A673 (cell line): ENCODE measurements at regions of chr1 and their contacts with region 1.

Region 1: GRCh38 chr1:57711326-57711725 is 287.5 kb upstream of the DAB1 start:
- DNase-seq: peak; percentile 70
- H3K4me3 ChIP-seq: no peak overlapping the region
- H3K27ac ChIP-seq: peak overlapping the region; percentile 80
- H3K4me1 ChIP-seq: peaks cover 73% of the 10 kb centered on the region
- H3K27me3 ChIP-seq: no peaks in the 10 kb centered on the region
- CTCF ChIP-seq: no peak

Region 2: DNA sequence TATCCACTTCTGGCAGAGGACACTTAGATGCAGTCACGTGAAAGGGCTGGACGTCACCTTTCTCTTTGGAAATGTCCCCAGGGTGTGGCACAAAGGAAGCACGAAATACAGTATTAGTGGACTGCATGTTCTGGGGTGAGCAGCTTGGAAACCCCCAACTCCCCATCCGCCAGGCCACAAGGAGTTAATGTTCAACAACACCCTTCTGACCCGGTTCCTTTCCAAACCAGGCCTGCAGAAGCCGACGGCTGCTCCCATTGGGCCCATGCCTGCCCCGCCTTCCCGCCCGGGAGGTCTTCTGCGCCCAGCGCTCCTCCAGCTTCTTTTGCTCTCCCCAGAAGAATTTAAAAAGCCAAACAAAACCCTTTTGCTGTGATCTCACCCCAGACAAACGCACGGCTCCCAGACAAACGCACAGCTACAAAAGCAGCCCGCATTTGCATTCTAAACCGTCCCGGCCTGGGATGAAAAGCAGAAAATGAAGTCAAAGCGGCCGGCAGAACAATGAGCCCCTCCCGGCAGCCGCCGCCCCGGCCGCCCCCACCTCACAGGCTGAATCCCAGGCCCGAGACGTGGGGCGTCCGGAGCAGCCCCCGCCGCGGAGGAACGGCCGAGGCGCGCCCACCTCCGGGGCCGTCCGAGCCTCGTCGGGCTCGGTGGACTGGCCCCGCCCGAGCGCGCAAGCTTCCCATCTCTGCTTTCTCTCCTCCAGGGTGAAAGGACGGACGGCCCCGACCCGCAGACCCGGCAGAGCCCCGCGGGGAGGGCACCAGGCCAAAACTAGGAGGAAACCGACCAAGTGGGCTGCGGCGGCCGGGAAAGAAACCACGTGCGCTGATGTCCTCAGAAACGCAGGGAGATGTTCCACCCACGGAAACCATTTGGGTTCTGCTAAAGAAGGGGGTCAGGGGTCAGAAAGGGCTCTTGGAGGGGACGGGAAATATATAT is 1233.9 kb before region 1 on chr1:
- CTCF ChIA-PET with region 1: no interaction called
- POLR2A ChIA-PET with region 1: no interaction called
- intact Hi-C with region 1: no loop called
- DNase-seq: no peak
- H3K4me3 ChIP-seq: no peak overlapping the region
- H3K27ac ChIP-seq: no peak overlapping the region
- H3K4me1 ChIP-seq: no peaks in the 10 kb centered on the region
- H3K27me3 ChIP-seq: peaks cover 56% of the 10 kb centered on the region
- CTCF ChIP-seq: no peak

Region 3: GRCh38 chr1:57800376-57800775 is 89.0 kb after region 1 on chr1:
- CTCF ChIA-PET with region 1: no interaction called
- POLR2A ChIA-PET with region 1: no interaction called
- intact Hi-C with region 1: no loop called
- DNase-seq: no peak
- H3K4me3 ChIP-seq: no peak overlapping the region
- H3K27ac ChIP-seq: no peak overlapping the region
- H3K4me1 ChIP-seq: no peaks in the 10 kb centered on the region
- H3K27me3 ChIP-seq: no peaks in the 10 kb centered on the region
- CTCF ChIP-seq: no peak

Region 4: DNA sequence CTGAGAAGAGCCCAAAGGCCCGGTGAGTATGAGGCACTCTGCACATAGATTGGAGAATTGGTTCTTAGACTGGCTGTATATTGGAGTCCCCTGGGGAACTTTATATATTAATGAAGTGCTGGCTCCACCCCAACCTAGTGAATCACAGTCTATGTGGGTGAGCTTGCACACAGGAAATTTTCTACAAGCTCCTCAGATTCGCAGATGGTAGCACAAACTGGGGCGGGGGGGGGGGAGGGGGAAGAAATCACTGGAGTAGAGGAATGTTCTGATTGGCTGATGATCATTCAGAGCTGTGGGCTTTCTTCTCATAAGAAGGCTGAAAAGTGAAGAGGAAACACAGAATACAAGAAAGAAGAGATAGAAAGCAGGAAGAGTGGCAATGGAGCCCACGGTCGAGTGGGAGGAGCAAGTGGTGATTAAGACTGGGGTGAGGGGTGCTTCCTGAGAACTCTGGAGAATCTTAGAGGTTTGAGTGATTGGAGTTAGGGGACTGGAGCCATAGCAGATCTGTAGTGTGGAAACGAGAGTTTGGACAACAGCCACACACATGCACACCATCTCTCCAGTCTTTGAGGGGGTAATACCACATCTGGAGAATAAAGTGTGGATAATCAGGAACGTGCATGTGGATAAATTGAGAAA is 178.5 kb after region 1 on chr1:
- CTCF ChIA-PET with region 1: no interaction called
- POLR2A ChIA-PET with region 1: interaction called, 3 read pairs
- intact Hi-C with region 1: loop called (anchors 5 kb)
- DNase-seq: peak; percentile 92
- H3K4me3 ChIP-seq: no peak overlapping the region
- H3K27ac ChIP-seq: peak overlapping the region; percentile 73
- H3K4me1 ChIP-seq: peaks cover 39% of the 10 kb centered on the region
- H3K27me3 ChIP-seq: no peaks in the 10 kb centered on the region
- CTCF ChIP-seq: no peak

Region 5: DNA sequence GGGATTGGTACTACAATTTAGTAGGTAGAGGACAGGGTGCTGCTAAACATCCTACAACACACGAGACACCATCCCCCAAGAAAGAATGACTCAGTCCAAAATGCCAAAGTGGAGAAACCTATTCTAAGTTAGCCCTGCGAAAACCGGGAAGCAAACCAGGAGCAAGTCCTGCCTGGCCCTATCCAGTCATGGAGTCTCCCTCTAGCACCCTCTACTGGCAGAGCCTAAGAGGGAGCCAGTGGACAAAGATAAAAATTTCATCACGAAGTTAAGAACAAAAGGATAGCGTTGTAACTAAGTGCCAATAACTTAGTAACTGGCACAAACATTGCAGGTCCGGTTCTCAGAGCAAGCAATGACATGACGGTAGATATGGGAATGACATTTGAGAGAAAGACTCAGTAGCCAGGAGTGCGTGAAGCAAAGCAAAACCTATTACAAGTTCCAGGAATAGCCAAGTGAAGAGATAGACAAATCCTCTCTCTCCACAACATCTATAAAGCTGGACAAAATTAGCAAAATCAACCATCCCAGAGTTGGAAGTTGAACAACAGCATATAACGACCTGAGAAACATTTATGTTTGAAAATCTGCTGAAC is 451.7 kb after region 1 on chr1:
- CTCF ChIA-PET with region 1: no interaction called
- POLR2A ChIA-PET with region 1: no interaction called
- intact Hi-C with region 1: loop called (anchors 1 kb)
- DNase-seq: peak; percentile 87
- H3K4me3 ChIP-seq: no peak overlapping the region
- H3K27ac ChIP-seq: no peak overlapping the region
- H3K4me1 ChIP-seq: peaks cover 17% of the 10 kb centered on the region
- H3K27me3 ChIP-seq: no peaks in the 10 kb centered on the region
- CTCF ChIP-seq: peak; percentile 98

Region 6: DNA sequence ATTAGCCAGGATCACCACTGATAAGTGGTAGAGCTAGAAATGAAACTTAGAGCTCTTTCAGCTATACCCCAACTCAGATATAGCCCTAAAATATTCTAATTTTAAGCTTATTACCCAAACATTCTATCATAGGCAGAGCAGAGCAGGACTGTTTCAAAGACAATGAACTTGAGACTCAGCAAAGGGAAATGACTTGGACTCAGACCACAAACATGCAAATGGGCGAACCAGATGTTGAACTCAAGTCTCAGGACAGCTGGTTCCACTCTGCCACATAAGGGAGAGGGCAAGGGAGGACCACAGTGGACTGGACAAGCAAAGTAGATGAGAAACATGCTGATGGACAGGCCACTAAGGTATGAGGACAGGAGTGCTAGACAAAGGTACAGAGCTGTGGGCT is 519.9 kb after region 1 on chr1:
- CTCF ChIA-PET with region 1: no interaction called
- POLR2A ChIA-PET with region 1: no interaction called
- intact Hi-C with region 1: no loop called
- DNase-seq: no peak
- H3K4me3 ChIP-seq: no peak overlapping the region
- H3K27ac ChIP-seq: no peak overlapping the region
- H3K4me1 ChIP-seq: no peaks in the 10 kb centered on the region
- H3K27me3 ChIP-seq: no peaks in the 10 kb centered on the region
- CTCF ChIP-seq: no peak

Region 7: DNA sequence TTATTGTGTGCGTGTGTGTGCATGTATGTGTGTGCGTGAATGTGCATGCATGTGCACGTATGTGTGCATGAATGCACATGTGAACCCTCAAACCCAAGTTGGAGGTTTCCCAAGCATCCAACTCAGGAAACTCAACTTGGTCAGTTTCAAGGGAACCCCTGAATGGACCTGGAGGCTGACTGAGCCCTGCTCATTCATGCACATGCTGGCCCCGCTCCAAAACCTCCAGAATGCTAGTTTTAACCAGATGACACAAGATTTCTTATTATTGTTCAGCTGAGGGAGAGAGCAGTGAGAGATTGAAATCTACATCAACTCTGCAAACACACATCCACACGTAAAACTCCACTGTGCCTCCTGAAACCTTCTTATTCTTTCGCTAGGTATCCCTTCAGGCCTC is 730.8 kb after region 1 on chr1:
- CTCF ChIA-PET with region 1: no interaction called
- POLR2A ChIA-PET with region 1: no interaction called
- intact Hi-C with region 1: loop called (anchors 5 kb)
- DNase-seq: peak; percentile 94
- H3K4me3 ChIP-seq: no peak overlapping the region
- H3K27ac ChIP-seq: peak overlapping the region; percentile 74
- H3K4me1 ChIP-seq: peaks cover 56% of the 10 kb centered on the region
- H3K27me3 ChIP-seq: no peaks in the 10 kb centered on the region
- CTCF ChIP-seq: no peak